ENCODE measurements at regions of chrX and their contacts with region 1.

Region 1: DNA sequence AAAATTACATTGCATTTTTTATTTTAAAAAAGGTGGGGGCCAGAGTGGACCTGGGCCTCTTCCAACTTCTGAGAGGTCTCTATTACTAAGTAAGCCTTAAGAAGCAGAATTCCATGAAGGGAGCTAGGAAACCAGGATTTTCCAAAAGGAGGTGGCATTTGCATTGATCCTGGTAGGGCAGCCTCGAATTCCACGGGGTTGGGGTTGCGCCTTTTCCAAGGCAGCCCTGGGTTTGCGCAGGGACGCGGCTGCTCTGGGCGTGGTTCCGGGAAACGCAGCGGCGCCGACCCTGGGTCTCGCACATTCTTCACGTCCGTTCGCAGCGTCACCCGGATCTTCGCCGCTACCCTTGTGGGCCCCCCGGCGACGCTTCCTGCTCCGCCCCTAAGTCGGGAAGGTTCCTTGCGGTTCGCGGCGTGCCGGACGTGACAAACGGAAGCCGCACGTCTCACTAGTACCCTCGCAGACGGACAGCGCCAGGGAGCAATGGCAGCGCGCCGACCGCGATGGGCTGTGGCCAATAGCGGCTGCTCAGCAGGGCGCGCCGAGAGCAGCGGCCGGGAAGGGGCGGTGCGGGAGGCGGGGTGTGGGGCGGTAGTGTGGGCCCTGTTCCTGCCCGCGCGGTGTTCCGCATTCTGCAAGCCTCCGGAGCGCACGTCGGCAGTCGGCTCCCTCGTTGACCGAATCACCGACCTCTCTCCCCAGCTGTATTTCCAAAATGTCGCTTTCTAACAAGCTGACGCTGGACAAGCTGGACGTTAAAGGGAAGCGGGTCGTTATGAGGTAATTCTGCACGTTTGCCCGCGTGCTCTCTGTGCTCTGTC is at the start of gene PGK1:
- DNase-seq: peak; percentile 90 to 96 (median 95)
- H3K4me3 ChIP-seq: peak within 1 kb of the TSS; percentile 62 to 90
- H3K4me3 Mint-ChIP-seq: peak within 1 kb of the TSS; percentile 87 to 94 (median 92)
- H3K27ac ChIP-seq: peak within 1 kb of the TSS; percentile 86
- H3K27ac Mint-ChIP-seq: peak within 1 kb of the TSS; percentile 92 to 98 (median 95)
- H3K4me1 ChIP-seq: peaks cover 34% of the 10 kb centered on the region
- H3K4me1 Mint-ChIP-seq: peaks cover 24 to 52% (median 36%) of the 10 kb centered on the region in 4 donors
- H3K27me3 ChIP-seq: no peaks in the 10 kb centered on the region
- H3K27me3 Mint-ChIP-seq: no peaks in the 10 kb centered on the region
- total RNA-seq, gene PGK1: 205 to 209 TPM

Region 2: DNA sequence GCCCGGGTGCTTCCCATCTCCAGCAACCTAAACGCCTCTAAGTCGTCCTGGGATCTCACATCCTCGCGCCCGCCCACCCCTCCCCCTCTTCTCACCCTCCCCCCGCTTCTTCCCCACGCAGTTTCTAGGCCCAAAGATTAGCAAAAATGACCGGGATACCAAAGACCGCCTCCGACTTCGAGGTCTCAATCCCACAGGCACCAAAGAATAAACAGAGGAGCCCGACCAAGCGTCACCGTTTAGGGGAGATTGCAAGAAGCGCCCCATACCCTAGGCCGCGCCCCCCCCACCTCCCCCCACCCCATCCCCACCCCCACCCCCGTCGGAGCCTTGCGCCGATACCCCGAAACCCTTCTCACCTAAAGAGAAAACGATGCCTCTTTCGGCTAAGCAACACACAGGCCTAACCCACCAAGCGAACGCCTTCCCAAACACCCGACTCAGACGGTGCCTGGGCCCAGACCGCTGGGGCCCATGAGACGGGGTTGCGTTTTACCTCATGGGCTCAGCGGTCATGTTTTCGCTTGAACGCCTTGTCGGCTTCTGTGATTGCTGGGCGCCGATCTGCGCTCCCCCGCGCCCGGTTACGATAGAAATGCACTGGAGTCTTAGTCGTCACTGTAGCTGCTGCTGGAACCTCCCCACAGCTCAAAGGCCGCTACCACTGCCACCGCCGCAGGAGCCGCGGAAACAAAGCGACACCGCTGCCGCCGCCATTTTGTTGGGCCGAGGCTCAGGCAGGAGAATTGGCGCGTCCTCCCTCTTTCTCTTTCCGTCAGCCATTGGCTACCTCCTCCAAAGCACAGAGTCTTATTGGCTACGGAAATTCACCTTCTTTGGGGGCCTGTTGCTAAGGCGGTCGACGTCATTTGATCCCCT is 318.1 kb before region 1 on chrX and contains the start of gene ATRX:
- CTCF ChIA-PET with region 1: no interaction called
- POLR2A ChIA-PET with region 1: interaction called, 3 read pairs
- intact Hi-C with region 1: loop called (anchors 2 kb)
- DNase-seq: peak; percentile 80 to 87 (median 82)
- H3K4me3 ChIP-seq: peak within 1 kb of the TSS; percentile 54 to 57
- H3K4me3 Mint-ChIP-seq: peak within 1 kb of the TSS; percentile 98 to 100 (median 99)
- H3K27ac ChIP-seq: peak within 1 kb of the TSS; percentile 90
- H3K27ac Mint-ChIP-seq: peak within 1 kb of the TSS; percentile 99 to 100 (median 100)
- H3K4me1 ChIP-seq: peaks cover 45% of the 10 kb centered on the region
- H3K4me1 Mint-ChIP-seq: peaks cover 10 to 55% (median 26%) of the 10 kb centered on the region in 4 donors
- H3K27me3 ChIP-seq: no peaks in the 10 kb centered on the region
- H3K27me3 Mint-ChIP-seq: no peaks in the 10 kb centered on the region
- total RNA-seq, gene ATRX: 106 to 111 TPM

Region 3: GRCh38 chrX:77910108-77910840 is 193.6 kb before region 1 on chrX and contains the start of gene ATP7A:
- CTCF ChIA-PET with region 1: no interaction called
- POLR2A ChIA-PET with region 1: interaction called, 5 read pairs
- intact Hi-C with region 1: loop called (anchors 2 kb)
- DNase-seq: peak; percentile 85 to 95 (median 91)
- H3K4me3 ChIP-seq: peak within 1 kb of the TSS; percentile 55 to 78
- H3K4me3 Mint-ChIP-seq: peak within 1 kb of the TSS; percentile 93 to 100 (median 96)
- H3K27ac ChIP-seq: peak within 1 kb of the TSS; percentile 82
- H3K27ac Mint-ChIP-seq: peak within 1 kb of the TSS; percentile 93 to 99 (median 98)
- H3K4me1 ChIP-seq: peaks cover 19% of the 10 kb centered on the region
- H3K4me1 Mint-ChIP-seq: peaks cover 10 to 31% (median 17%) of the 10 kb centered on the region in 4 donors
- H3K27me3 ChIP-seq: no peaks in the 10 kb centered on the region
- H3K27me3 Mint-ChIP-seq: no peaks in the 10 kb centered on the region
- total RNA-seq, gene ATP7A: 15.3 to 16.8 TPM

Region 4: GRCh38 chrX:78327370-78328086 is 223.7 kb after region 1 on chrX and contains the start of gene CYSLTR1:
- CTCF ChIA-PET with region 1: no interaction called
- POLR2A ChIA-PET with region 1: no interaction called
- intact Hi-C with region 1: loop called (anchors 5 kb)
- DNase-seq: peak in 1 of 5 donors; percentile 31
- H3K4me3 ChIP-seq: peak within 1 kb of the TSS; percentile 46 to 65
- H3K4me3 Mint-ChIP-seq: peak within 1 kb of the TSS; percentile 65 to 91 (median 80)
- H3K27ac ChIP-seq: peak within 1 kb of the TSS; percentile 54
- H3K27ac Mint-ChIP-seq: peak within 1 kb of the TSS; percentile 49 to 93 (median 84)
- H3K4me1 ChIP-seq: peaks cover 64% of the 10 kb centered on the region
- H3K4me1 Mint-ChIP-seq: peaks cover 29 to 68% (median 48%) of the 10 kb centered on the region in 4 donors
- H3K27me3 ChIP-seq: no peaks in the 10 kb centered on the region
- H3K27me3 Mint-ChIP-seq: no peaks in the 10 kb centered on the region
- total RNA-seq, gene CYSLTR1: 29.4 to 31.2 TPM

Region 5: GRCh38 chrX:79412972-79413371 is 1309.1 kb after region 1 on chrX:
- CTCF ChIA-PET with region 1: no interaction called
- POLR2A ChIA-PET with region 1: no interaction called
- intact Hi-C with region 1: loop called (anchors 10 kb)
- DNase-seq: peak in 4 of 5 donors; percentile 48 to 54 (median 50)
- H3K4me3 ChIP-seq: peak overlapping the region; percentile 23 to 34
- H3K4me3 Mint-ChIP-seq: peak overlapping the region; percentile 71 to 84 (median 82)
- H3K27ac ChIP-seq: peak overlapping the region; percentile 56
- H3K27ac Mint-ChIP-seq: peak overlapping the region; percentile 41 to 88 (median 82)
- H3K4me1 ChIP-seq: peaks cover 7% of the 10 kb centered on the region
- H3K4me1 Mint-ChIP-seq: peaks cover 18 to 35% (median 22%) of the 10 kb centered on the region in 4 donors
- H3K27me3 ChIP-seq: no peaks in the 10 kb centered on the region
- H3K27me3 Mint-ChIP-seq: no peaks in the 10 kb centered on the region

Measured in CD4-positive, alpha-beta memory T cell (primary cell).